ENCODE measurements at regions of chr17 and their contacts with region 1.

Region 1: DNA sequence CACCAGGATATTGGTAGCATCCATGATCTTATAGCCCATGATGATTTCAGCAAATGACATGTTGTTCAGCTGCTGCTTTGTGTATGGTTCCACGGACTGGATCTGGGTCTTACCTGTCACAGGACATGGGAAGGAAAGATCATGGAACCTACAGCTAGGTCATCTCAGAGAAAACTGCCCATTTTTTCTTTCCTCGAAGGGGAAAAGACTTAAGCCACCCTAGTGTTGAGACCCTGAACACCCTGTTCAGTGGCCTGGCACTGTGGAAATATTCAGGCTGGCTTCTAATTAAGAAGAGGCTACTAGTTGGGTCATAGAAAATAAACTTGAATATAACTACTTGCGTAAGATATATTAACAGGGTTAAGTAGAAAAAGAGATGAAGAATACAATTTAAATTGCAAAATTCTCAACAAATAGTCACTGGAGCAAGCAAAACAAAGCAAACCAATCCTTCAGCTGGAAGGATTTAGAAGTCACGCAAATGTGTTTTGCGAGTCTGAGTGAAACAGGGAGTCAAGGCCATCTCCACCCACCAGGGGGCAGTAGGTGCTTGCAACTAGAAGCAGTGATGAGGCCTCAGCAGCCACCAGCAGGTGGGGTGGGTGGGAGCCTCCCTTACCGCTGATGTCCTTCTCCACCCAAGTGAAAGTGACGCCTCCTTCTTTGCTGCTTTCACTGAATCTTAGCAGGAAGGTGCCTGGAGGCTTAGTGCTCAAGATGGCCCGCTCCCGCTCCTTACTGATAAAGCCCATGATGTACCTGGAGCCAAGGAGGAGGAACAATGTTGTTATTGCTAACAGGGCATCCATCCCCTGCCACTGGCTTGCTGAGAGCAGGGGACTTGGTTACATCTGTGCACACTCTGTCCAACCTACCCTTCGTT is 34.3 kb downstream of the STAT5A start:
- DNase-seq: peak; percentile 88
- CTCF ChIP-seq: peak; percentile 99

Region 2: DNA sequence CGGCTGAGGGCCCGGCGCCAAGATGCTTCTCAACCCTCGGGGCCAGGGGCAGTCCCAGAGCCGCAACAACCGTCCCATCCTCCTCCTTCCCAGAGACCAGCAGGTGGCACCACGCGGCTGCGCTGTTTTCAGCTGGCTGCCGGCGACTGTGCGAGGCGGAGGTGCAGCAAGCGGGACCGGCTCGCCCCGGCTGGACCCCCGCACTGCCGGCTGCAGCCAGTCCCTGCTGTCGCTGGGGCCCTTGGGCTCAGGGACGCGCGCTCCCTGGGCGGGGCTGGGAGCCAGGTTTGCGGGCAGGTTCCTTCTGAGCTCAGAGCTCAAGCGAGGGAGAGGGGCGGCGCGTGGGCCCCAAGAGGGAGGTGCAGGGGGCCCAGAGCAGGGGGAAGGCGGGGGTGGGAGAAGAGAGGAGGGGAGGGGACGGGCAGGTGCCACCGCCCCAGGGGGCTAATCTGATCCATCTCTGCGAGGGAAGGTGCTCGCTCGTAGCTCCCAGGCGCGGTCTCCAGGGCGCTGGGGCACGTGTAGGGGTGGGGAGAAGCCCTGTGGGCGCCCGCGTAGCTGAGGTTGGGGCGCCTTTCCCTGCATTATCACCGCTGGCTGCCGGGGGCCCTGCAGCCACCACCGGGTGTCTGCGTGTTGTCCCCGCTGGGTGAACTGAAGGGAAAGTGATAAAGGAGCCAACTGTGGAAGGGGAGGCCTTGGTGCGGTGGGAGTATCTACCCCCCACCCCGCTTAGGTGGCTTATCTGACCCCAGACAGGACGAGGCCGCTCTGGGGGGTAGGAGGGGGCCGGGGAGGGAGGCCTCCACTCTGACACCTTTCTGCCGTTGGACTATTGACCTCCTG is 10.1 kb before region 1 on chr17:
- CTCF ChIA-PET with region 1: interaction called, 85 read pairs
- POLR2A ChIA-PET with region 1: interaction called, 12 read pairs
- DNase-seq: peak; percentile 82
- CTCF ChIP-seq: peak; percentile 76

Region 3: DNA sequence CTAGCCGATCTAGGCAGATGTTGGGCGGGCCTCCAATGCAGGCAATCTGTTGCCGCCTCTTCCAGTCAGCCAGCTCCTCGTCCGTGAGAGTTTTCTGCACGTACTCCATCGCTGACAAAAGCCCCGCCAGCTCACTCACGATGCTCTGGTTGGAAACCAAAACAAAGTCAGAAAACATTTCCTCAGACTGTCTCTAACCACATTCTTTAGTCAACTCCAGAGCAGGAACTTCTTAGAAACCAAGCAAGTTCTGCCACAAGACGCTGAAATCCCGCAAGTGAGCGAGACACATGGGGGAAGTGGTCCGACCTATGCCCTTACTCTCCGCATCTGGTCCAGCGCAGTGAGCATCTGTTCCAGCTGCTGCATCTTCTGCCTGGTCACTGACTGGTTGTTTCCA is 14.8 kb after region 1 on chr17:
- CTCF ChIA-PET with region 1: interaction called, 11 read pairs
- POLR2A ChIA-PET with region 1: no interaction called
- DNase-seq: peak; percentile 78
- CTCF ChIP-seq: no peak

Region 4: GRCh38 chr17:42378597-42379594 is 56.3 kb after region 1 on chr17:
- CTCF ChIA-PET with region 1: interaction called, 10 read pairs
- POLR2A ChIA-PET with region 1: no interaction called
- DNase-seq: no peak
- CTCF ChIP-seq: no peak

Region 5: GRCh38 chr17:42388381-42389134 is 65.9 kb after region 1 on chr17 and contains the start of gene STAT3:
- CTCF ChIA-PET with region 1: interaction called, 890 read pairs
- POLR2A ChIA-PET with region 1: interaction called, 3 read pairs
- DNase-seq: peak; percentile 98
- CTCF ChIP-seq: no peak

Measured in GM10248 (cell line).